ENCODE measurements at regions of chr1 and their contacts with region 1.

Region 1: GRCh38 chr1:24964811-24965570 is 34.9 kb upstream of the RUNX3 start:
- DNase-seq: peak; percentile 98
- ATAC-seq: peak; percentile 81
- H3K4me3 Mint-ChIP-seq: peak overlapping the region; percentile 94
- H3K27ac Mint-ChIP-seq: peak overlapping the region; percentile 94
- H3K4me1 Mint-ChIP-seq: peaks cover 72% of the 10 kb centered on the region
- H3K27me3 Mint-ChIP-seq: no peaks in the 10 kb centered on the region

Region 2: DNA sequence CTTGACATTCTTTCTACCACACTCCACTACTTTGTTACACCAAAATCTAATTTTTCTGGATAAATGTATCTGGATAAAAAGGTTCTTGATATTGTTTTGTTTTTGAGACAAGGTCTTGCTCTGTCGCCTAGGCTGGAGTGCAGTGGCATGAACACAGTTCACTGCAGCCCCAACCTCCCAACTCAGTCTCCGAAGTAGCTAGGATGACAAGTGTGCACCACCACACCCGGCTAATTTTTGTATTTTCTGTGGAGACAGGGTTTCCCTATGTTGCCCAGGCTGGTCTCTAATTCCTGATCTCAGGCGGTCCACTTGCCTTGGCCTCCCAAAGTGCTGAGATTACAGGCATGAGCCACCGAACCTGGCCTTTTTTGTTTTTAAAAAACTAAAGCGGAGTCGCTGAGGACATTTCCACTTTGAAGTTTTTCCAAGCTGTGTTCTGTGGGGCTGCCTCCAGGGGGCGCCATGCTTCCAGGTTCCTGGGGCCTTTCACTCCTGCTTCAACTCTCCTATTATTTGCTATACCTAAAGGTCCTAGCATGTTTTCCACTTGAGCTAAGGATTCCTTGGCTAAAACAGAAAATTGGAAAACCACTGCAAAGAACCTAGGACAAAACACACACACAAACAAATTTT is 423.2 kb before region 1 on chr1:
- CTCF ChIA-PET with region 1: no interaction called
- POLR2A ChIA-PET with region 1: no interaction called
- intact Hi-C with region 1: loop called in 1 of 2 experiments (anchors 1 kb)
- DNase-seq: peak; percentile 68
- ATAC-seq: no peak
- H3K4me3 Mint-ChIP-seq: peak overlapping the region; percentile 48
- H3K27ac Mint-ChIP-seq: peak overlapping the region; percentile 93
- H3K4me1 Mint-ChIP-seq: peaks cover 69% of the 10 kb centered on the region
- H3K27me3 Mint-ChIP-seq: no peaks in the 10 kb centered on the region

Region 3: DNA sequence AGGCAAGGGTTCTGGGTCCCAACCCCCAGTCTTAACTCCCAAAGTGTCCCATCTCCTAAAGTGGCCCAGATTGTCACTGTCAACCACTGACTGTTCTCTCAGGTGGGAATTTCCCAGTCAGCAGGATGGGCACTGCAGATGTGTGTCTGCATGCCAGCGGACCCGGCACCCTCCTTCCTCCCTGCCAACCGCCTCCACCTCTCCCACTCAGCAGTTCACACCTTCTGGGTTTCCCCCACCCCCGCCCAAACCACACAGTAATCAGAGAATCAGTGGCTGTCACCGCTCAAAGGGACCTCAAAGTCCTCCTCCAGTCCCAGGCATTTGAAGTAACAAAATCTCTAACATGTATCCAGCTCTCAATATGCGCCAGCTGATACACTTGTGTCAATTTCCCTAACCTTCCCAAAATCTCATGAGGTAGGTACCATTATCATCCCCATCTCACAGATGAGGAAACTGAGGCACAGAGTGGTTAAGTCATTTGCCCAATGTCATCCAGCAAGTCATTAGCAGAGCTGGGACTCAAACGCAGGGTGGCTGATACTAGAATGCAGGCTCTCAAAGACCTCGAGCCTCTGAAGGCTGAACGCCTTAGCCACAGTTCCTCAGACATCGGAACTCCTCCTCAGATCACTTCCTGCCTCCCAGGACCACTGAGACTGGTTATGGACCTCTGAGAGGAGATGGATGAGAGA is 39.8 kb before region 1 on chr1:
- CTCF ChIA-PET with region 1: interaction called, 5 read pairs
- POLR2A ChIA-PET with region 1: interaction called, 11 read pairs
- intact Hi-C with region 1: loop called (anchors 1 kb)
- DNase-seq: peak; percentile 92
- ATAC-seq: peak; percentile 45
- H3K4me3 Mint-ChIP-seq: peak overlapping the region; percentile 80
- H3K27ac Mint-ChIP-seq: peak overlapping the region; percentile 91
- H3K4me1 Mint-ChIP-seq: peaks cover 70% of the 10 kb centered on the region
- H3K27me3 Mint-ChIP-seq: no peaks in the 10 kb centered on the region

Region 4: DNA sequence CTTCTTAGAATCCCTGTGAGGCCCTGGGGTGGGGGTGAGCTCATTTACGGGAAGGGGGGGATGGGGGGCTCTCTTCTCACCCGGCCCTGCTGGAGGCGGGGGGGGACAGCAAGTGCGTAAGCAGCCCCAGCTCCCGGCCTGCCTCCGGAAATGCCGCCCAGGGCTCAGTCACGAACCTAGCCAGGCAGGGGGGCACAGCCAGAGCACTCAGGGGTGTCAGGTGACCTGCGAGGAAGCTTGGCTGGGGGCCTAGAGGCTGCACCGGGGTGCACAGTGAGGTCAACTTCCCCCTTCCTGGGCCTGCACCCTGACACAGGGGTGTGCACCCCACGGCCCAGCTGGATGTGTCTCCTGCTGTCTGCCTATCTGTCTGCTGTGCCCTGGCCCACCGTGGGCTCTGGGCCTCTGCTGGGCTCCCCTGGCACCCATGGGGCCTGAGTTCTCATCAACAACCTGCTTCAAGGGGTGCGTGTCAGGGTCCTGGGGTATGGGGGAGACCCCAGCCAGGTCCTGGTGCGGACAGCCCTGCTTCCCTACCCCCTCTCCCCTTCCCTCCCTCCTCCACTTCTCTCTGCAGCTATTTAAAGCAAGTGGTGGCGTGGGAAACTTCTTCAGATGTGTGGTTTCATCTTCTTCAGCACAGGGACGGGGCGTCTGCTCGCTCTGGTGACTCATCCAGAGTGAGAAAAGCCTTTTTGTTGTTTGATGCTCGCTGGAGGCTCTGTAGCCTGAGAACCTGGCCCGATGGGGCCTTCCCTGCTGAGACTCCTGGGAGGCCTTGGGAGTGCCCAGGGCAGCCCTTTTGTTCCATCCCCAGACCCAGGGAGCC is 57.6 kb after region 1 on chr1:
- CTCF ChIA-PET with region 1: interaction called, 17 read pairs
- POLR2A ChIA-PET with region 1: interaction called, 35 read pairs
- intact Hi-C with region 1: loop called (anchors 1 kb)
- DNase-seq: peak; percentile 97
- ATAC-seq: peak; percentile 84
- H3K4me3 Mint-ChIP-seq: peak overlapping the region; percentile 77
- H3K27ac Mint-ChIP-seq: peak overlapping the region; percentile 99
- H3K4me1 Mint-ChIP-seq: peaks cover 92% of the 10 kb centered on the region
- H3K27me3 Mint-ChIP-seq: no peaks in the 10 kb centered on the region

Region 5: GRCh38 chr1:25099343-25099951 is 134.5 kb after region 1 on chr1:
- CTCF ChIA-PET with region 1: interaction called, 5 read pairs
- POLR2A ChIA-PET with region 1: interaction called, 4 read pairs
- intact Hi-C with region 1: loop called in 1 of 2 experiments (anchors 5 kb)
- DNase-seq: peak; percentile 52
- ATAC-seq: peak; percentile 54
- H3K4me3 Mint-ChIP-seq: no peak overlapping the region
- H3K27ac Mint-ChIP-seq: peak overlapping the region; percentile 62
- H3K4me1 Mint-ChIP-seq: peaks cover 58% of the 10 kb centered on the region
- H3K27me3 Mint-ChIP-seq: no peaks in the 10 kb centered on the region

Region 6: GRCh38 chr1:25247024-25247828 is 282.2 kb after region 1 on chr1 and contains the start of gene RSRP1:
- CTCF ChIA-PET with region 1: no interaction called
- POLR2A ChIA-PET with region 1: no interaction called
- intact Hi-C with region 1: loop called in 1 of 2 experiments (anchors 2 kb)
- DNase-seq: peak; percentile 100
- ATAC-seq: peak; percentile 90
- H3K4me3 Mint-ChIP-seq: peak within 1 kb of the TSS; percentile 96
- H3K27ac Mint-ChIP-seq: peak within 1 kb of the TSS; percentile 99
- H3K4me1 Mint-ChIP-seq: peaks cover 40% of the 10 kb centered on the region
- H3K27me3 Mint-ChIP-seq: no peaks in the 10 kb centered on the region
- total RNA-seq, gene RSRP1: 86.8 to 120 TPM